Ovary (tissue), 10 donors: ENCODE measurements at regions of chr15 and their contacts with region 1.

Region 1: DNA sequence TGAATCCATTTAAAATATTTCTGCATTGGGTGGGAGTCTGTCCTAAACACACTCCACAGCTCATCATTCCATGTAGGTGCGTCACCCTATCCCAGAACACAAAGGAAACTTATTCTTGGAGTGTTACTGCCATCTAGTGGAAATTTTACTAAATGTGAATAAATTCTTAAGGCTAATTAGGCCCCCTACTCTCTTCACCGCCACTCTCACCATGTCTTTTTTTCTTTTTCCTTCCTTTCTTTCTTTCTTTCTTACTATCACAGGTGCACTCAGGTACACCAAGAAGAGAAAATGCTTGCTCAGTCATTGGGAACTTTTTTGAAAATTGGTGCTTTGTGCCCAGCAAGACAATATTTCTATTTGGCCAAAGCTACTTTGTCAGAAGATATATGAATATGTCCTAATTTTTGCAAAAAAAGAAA is 26.4 kb upstream of the ATP8B4 start:
- DNase-seq: peak in 3 of 5 donors; percentile 25 to 55 (median 28)
- H3K4me3 ChIP-seq: no peak overlapping the region
- H3K27ac ChIP-seq: no peak overlapping the region
- H3K4me1 ChIP-seq: no peaks in the 10 kb centered on the region
- H3K27me3 ChIP-seq: no peaks in the 10 kb centered on the region
- CTCF ChIP-seq: peak; percentile 27 to 60 (median 57)
- EP300 ChIP-seq: no peak
- POLR2A ChIP-seq: no peak

Region 2: DNA sequence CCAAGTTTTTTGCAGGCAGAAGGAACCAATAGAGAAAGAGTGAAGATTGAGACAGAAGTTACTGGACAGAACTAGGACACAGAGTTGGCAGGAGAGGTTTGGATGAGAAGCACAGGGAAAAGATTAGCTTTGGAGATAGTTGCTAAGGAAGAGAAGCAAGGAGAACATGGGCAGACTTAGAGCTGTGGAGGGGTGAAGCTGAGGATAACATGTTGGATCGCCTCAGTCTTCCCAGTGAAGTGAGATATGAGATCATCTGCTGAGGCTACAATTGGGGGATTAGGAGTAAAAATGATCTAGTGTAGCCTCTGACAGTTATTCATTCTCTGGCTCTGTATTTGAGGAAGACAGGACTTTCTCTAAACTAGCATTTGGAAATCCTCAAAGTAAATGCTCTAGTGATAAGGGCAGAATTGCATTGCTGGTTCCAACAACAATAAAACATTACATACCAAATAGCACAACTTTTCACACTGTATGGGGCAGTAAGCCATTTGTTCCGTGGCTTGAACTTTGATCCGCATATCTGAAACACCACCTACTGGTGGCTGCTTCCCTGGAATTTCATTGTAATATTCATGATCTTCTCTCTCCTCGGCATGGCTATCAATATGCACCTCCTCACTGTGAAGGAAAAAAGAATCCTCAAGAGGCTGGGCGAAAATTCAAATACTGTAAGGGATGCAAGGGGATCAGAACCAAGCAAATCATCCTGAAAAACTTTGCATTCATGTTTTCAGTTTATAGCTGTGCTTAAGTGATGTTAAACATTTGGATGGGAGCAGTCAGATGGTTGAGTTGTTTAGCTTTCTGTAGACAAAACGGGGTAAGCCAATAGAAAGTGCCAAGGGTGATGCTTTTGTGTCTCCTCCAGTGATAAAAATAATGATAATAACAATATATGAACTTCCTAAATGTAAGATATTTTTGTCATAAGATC is 1289.7 kb before region 1 on chr15:
- intact Hi-C with region 1: loop called in 2 of 4 experiments (anchors 5 to 10 kb)
- DNase-seq: no peak
- H3K4me3 ChIP-seq: no peak overlapping the region
- H3K27ac ChIP-seq: no peak overlapping the region
- H3K4me1 ChIP-seq: peaks cover 5% of the 10 kb centered on the region
- H3K27me3 ChIP-seq: no peaks in the 10 kb centered on the region
- CTCF ChIP-seq: peak in 1 of 3 donors; percentile 32
- EP300 ChIP-seq: no peak
- POLR2A ChIP-seq: no peak

Region 3: DNA sequence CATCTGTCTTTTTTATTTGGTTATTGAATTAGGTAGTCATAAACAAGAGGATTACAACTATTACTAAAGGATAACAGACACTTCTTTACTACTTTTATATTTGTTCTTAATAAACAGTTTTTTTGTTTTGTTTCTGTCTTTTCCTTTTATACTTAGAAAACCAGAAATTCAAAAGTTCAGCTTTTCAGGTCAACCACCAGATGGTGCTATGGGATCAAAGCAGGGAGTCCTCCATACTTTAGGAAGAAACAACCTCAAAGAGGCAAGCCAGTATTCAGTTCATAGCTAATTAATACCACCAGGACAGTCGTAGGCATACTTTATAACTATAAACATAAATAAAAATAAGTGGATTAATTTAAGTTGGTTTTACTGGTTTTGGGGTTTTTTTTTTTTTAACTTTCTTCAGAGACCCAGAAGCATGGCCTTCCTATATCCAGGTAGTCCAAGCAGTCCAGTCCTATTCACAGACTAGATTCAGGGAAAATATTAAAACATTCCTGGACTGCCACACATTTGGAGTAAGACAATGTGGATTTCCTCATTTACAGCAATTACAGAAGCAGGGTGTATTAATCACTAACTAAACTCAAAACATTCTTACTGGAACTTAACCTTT is 1283.5 kb before region 1 on chr15:
- intact Hi-C with region 1: loop called in 2 of 4 experiments (anchors 5 to 10 kb)
- DNase-seq: peak in 2 of 5 donors; percentile 11 to 21
- H3K4me3 ChIP-seq: no peak overlapping the region
- H3K27ac ChIP-seq: no peak overlapping the region
- H3K4me1 ChIP-seq: no peaks in the 10 kb centered on the region
- H3K27me3 ChIP-seq: no peaks in the 10 kb centered on the region
- CTCF ChIP-seq: peak; percentile 45 to 93 (median 76)
- EP300 ChIP-seq: no peak
- POLR2A ChIP-seq: no peak

Region 4: DNA sequence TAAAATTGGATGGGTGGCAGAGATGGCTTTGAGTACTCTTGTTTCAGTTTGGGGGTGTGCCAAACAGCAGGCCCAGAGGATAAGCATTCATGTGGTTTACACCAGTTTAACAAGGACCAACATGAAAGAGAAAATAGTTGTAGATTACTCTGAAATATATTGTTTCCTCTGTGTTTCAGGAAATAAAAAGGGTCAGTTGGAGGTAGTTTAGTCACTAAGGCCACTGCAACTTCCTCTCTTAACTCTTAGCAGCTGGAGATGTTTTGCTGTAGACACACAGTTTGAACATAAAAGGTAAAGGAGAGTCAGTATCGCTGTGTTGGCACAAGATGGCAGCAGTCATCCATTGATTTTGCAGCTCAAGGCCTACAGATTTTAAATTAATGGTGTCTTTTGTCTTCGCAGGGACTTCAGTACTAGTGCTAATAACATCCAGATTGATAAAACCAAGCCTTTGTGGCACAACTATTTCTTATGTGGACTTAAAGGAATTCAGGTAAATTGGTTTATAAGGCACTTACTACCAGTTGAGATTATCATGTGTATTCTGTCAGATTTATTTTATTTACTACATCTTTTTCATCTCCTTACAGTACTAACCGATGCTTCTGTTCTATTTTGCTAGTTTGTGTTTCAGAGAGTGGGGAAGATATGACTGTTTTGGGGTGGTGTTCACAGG is 909.9 kb before region 1 on chr15:
- intact Hi-C with region 1: loop called (anchors 10 kb)
- DNase-seq: peak; percentile 51 to 77 (median 65)
- H3K4me3 ChIP-seq: no peak overlapping the region
- H3K27ac ChIP-seq: peak overlapping the region in 1 of 2 donors; percentile 37
- H3K4me1 ChIP-seq: peaks cover 2% of the 10 kb centered on the region
- H3K27me3 ChIP-seq: no peaks in the 10 kb centered on the region
- CTCF ChIP-seq: peak; percentile 59 to 85 (median 84)
- EP300 ChIP-seq: no peak
- POLR2A ChIP-seq: no peak

Region 5: GRCh38 chr15:49242820-49243219 is 902.6 kb before region 1 on chr15:
- intact Hi-C with region 1: loop called (anchors 10 kb)
- DNase-seq: no peak
- H3K4me3 ChIP-seq: no peak overlapping the region
- H3K27ac ChIP-seq: no peak overlapping the region
- H3K4me1 ChIP-seq: peaks cover 5% of the 10 kb centered on the region
- H3K27me3 ChIP-seq: no peaks in the 10 kb centered on the region
- CTCF ChIP-seq: no peak
- EP300 ChIP-seq: no peak
- POLR2A ChIP-seq: no peak

Region 6: GRCh38 chr15:49421991-49422390 is 723.5 kb before region 1 on chr15:
- intact Hi-C with region 1: loop called in 1 of 4 experiments (anchors 5 kb)
- DNase-seq: peak; percentile 39 to 73 (median 68)
- H3K4me3 ChIP-seq: peak overlapping the region; percentile 51
- H3K27ac ChIP-seq: peak overlapping the region in 1 of 2 donors; percentile 66
- H3K4me1 ChIP-seq: no peaks in the 10 kb centered on the region
- H3K27me3 ChIP-seq: no peaks in the 10 kb centered on the region
- CTCF ChIP-seq: peak; percentile 58 to 93 (median 73)
- EP300 ChIP-seq: no peak
- POLR2A ChIP-seq: no peak

Region 7: GRCh38 chr15:49901996-49902684 is 243.3 kb before region 1 on chr15:
- intact Hi-C with region 1: loop called in 1 of 4 experiments (anchors 10 kb)
- DNase-seq: no peak
- H3K4me3 ChIP-seq: peak overlapping the region; percentile 5
- H3K27ac ChIP-seq: peak overlapping the region; percentile 65 to 85
- H3K4me1 ChIP-seq: peaks cover 12% of the 10 kb centered on the region
- H3K27me3 ChIP-seq: no peaks in the 10 kb centered on the region
- CTCF ChIP-seq: peak in 2 of 3 donors; percentile 19 to 59
- EP300 ChIP-seq: no peak
- POLR2A ChIP-seq: peak; percentile 22

Region 8: DNA sequence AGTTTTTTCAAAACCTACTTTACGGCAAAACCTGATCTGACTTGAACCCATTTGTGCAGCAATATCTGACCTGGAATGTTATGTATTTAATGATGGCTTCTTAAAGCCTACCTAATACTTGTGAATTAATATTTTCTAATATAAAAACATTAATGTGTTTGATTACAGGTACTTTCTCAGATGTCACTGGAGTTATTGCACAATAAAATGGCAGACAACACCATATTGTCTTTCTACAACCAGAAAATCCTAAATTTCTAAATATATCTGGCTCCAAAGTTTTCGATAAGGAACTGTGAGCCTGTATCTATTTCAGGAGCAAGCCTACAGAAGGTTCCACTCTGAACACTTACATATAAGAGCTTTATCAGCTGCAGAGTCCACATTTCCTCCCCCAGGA is 211.0 kb before region 1 on chr15:
- intact Hi-C with region 1: no loop called
- DNase-seq: no peak
- H3K4me3 ChIP-seq: no peak overlapping the region
- H3K27ac ChIP-seq: no peak overlapping the region
- H3K4me1 ChIP-seq: no peaks in the 10 kb centered on the region
- H3K27me3 ChIP-seq: no peaks in the 10 kb centered on the region
- CTCF ChIP-seq: no peak
- EP300 ChIP-seq: no peak
- POLR2A ChIP-seq: no peak